ENCODE measurements at regions of chr2 and their contacts with region 1.

Region 1: DNA sequence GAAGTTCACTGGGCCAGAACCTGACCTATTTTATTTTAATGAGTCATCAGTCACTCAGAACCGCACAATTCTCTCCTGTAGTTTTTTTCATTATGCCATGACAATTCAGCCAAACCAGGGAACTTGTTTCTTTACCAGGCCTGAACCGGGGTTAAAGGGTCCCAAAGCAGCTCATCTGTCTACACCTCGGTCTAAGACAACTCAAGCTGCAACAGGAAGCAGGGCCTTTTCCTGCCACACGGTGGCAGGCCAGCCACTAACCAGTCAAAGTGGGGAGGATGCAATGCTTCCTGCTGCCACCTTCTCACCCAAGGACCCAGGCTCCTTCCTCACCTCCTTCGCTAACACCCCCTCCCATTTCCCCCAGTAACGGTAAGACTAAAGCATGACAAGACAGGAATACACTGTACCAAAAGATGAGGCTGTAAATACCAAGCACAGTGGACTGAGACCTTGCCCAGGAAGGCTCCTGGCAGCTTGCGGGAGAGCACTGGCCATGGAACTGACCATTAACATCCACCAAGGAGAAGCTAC is 56.7 kb upstream of the ACKR3 start:
- DNase-seq: peak; percentile 82
- H3K4me3 Mint-ChIP-seq: no peak overlapping the region
- H3K27ac Mint-ChIP-seq: no peak overlapping the region
- H3K4me1 Mint-ChIP-seq: peaks cover 11% of the 10 kb centered on the region
- H3K27me3 Mint-ChIP-seq: peaks cover 7% of the 10 kb centered on the region

Region 2: GRCh38 chr2:236526455-236527158 is 13.6 kb after region 1 on chr2:
- CTCF ChIA-PET with region 1: interaction called, 15 read pairs
- intact Hi-C with region 1: no loop called
- DNase-seq: no peak
- H3K4me3 Mint-ChIP-seq: no peak overlapping the region
- H3K27ac Mint-ChIP-seq: no peak overlapping the region
- H3K4me1 Mint-ChIP-seq: no peaks in the 10 kb centered on the region
- H3K27me3 Mint-ChIP-seq: no peaks in the 10 kb centered on the region

Region 3: DNA sequence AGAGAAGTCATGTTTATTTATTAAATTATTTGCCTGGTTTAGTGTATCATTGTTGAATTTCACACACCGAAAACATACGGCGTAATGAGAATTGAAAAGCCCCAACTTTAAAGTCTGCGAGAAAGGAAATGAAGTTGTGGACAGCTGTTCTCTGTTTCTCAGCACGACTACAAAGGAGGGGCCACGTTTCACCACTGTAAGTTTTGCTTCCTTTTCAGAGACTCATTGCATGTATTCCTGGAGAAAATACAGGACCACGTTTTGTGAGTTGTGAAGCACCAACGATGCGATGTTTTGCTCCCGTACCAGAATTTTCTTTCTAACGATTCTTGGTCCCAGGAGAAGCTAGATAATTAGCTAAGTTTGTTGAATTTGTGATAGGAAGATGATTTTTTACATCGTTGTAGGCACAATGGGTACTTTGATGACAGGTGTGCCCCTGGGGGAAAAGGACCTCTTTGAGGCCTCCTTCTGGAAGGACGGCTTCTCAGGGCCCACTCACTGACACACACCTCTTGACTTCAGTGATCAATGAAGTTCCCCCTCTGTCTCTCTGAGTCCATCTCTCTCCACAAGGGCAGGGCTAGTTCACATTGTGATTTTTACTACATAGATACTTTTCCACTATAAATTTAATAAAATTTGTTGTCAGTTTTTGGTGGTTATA is 33.0 kb after region 1 on chr2:
- CTCF ChIA-PET with region 1: interaction called, 22 read pairs
- intact Hi-C with region 1: no loop called
- DNase-seq: peak; percentile 70
- H3K4me3 Mint-ChIP-seq: peak overlapping the region; percentile 64
- H3K27ac Mint-ChIP-seq: peak overlapping the region; percentile 89
- H3K4me1 Mint-ChIP-seq: peaks cover 82% of the 10 kb centered on the region
- H3K27me3 Mint-ChIP-seq: no peaks in the 10 kb centered on the region

Region 4: DNA sequence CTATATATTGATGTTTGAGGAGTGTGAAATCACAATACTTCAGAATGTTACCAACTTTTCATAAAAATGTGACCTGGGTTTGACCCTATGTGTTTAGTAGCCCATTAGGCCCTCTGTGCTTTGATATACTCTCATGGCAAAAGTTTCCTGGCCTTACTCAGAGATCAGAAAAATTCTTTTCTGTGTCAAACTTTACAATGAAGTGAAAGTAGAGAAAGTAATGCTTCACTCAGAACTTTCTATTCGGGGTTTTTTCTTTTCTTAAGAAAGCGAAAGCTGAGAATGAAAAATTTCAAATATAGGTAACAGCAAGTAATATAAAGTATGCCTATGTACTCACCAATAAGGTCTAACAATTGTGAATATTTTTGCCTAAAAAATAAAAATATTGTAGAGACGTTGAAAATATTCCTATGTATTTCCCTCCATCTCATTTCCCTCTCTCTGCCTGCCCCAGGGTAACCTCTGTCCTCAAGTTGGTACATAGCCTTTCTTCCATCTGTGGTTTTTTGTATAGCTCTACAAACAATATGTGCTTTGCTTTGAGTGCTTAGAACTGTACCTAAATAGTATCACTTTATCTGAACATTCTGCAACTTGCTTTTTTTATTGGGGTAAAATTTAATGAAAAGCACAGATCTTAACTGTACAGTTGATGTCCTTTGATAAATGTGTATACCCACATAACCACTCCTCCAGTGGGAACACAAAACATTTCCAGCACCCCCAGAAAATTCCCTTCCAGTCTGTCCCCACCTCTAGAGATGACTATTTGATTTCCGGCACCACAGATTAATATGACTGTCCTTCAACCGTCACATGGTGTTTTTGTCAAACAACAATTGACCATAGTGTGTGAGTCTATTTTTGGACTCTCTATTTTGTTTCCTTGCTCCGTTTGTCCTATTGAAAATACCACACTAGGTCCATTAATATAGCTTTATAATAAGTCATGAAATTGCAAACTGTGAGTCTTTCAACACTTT is 46.3 kb after region 1 on chr2:
- CTCF ChIA-PET with region 1: interaction called, 24 read pairs
- intact Hi-C with region 1: loop called (anchors 1 kb)
- DNase-seq: no peak
- H3K4me3 Mint-ChIP-seq: peak overlapping the region; percentile 28
- H3K27ac Mint-ChIP-seq: no peak overlapping the region
- H3K4me1 Mint-ChIP-seq: peaks cover 52% of the 10 kb centered on the region
- H3K27me3 Mint-ChIP-seq: no peaks in the 10 kb centered on the region

Region 5: GRCh38 chr2:237026981-237027711 is 514.2 kb after region 1 on chr2:
- CTCF ChIA-PET with region 1: interaction called, 4 read pairs
- intact Hi-C with region 1: loop called (anchors 1 kb)
- DNase-seq: peak; percentile 65
- H3K4me3 Mint-ChIP-seq: no peak overlapping the region
- H3K27ac Mint-ChIP-seq: no peak overlapping the region
- H3K4me1 Mint-ChIP-seq: no peaks in the 10 kb centered on the region
- H3K27me3 Mint-ChIP-seq: no peaks in the 10 kb centered on the region

Region 6: DNA sequence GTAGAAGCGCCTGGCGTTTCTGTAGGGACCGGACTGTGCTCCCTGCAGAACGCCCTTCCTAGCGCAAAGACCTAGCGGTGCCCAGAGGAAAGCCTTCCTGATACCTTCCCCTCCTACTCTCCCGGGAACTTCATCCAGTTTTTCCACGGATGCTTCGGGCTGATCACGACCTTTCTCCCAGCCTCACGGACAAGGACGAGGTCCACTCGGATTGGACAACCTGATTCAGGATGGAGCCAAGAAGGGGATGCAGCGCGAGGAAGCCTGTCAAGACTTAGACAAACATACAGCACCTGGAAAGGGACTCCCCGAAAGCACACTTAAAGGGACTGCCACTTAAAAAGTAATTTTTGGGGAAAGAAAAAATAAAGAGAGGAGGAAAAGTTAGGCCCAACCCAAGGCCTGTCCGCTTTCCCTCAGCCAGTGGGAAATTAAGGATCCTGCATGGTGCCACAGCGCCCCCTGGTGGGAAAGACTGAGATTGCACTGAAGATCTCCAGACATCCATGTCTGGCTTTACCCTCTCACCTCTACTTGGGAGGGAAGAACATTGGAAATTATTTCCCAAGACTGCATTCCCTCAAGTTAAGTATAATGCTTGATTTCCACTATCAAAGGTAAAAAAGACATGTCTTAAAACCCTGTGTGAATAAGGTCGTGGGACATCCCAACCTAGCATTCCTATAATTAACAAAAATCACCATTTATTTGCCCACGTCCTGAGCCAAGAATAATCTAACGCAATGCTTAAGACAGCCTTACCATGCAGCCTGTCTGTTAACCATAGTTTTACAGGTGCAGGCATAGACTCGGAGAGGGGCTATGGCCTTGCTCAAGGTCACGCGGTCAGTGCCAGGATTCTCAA is 559.3 kb after region 1 on chr2:
- CTCF ChIA-PET with region 1: interaction called, 4 read pairs
- intact Hi-C with region 1: loop called (anchors 2 kb)
- DNase-seq: peak; percentile 82
- H3K4me3 Mint-ChIP-seq: no peak overlapping the region
- H3K27ac Mint-ChIP-seq: no peak overlapping the region
- H3K4me1 Mint-ChIP-seq: no peaks in the 10 kb centered on the region
- H3K27me3 Mint-ChIP-seq: no peaks in the 10 kb centered on the region

Region 7: DNA sequence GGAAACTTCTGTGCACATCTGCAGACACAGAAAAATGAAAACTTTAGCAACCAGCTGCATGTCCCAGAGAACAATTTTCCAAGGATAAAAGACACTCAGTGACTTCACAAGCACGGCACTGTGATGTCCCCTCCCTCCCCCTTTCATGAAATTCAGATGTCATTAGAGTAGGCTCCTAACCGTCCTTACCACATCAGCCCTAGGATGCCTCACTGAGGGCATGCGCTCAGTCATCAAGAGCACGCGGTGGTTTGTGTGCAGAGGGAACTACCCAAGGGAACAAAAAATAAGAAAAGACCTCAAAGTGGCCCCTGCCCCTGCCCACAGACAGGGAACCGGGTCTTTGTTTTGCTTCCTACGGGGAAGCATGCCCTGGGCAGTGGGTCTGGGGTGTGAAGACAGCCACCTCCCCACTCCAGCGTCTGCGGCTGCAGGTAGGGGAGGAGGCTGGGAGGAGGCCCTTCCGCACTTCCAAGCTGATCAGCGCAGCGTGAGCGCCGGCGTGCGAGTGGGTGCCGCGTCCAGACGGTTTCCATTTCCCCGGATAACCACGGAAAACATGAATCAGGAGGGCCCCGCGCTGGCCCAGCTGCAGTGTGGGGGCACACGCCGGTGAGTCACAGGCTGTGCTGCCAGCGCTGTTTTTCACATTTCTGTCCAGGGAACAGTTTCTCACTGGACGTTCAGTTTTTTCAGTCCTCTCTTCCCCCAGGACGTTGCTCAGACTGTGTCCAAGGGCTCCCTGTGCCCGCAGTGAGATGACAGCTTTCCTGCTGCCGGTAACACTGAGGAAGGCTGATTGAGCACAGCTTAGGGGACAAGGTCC is 643.3 kb after region 1 on chr2:
- CTCF ChIA-PET with region 1: no interaction called
- intact Hi-C with region 1: no loop called
- DNase-seq: peak; percentile 61
- H3K4me3 Mint-ChIP-seq: no peak overlapping the region
- H3K27ac Mint-ChIP-seq: peak overlapping the region; percentile 38
- H3K4me1 Mint-ChIP-seq: peaks cover 30% of the 10 kb centered on the region
- H3K27me3 Mint-ChIP-seq: no peaks in the 10 kb centered on the region

Measured in activated naive CD4-positive, alpha-beta T cell treated with anti-CD3 and anti-CD28 coated beads for 36 hours (primary cell).